SK-N-SH (cell line): ENCODE measurements at regions of chr20 and their contacts with region 1.

Region 1: GRCh38 chr20:36773597-36774390 is at the start of gene DSN1:
- DNase-seq: peak; percentile 97
- H3K4me3 ChIP-seq: peak within 1 kb of the TSS; percentile 76 to 88
- H3K27ac ChIP-seq: peak within 1 kb of the TSS; percentile 94 to 98
- H3K4me1 ChIP-seq: peaks cover 0 to 8% of the 10 kb centered on the region in 2 experiments; a peak in 1 of 4 replicates
- H3K27me3 ChIP-seq: no peaks in the 10 kb centered on the region
- CTCF ChIP-seq: no peak
- EP300 ChIP-seq: no peak
- RAD21 ChIP-seq: no peak; the same call in none of the 2 replicates
- polyA plus RNA-seq, gene DSN1: 7.3 and 8.3 TPM in 2 replicates

Region 2: GRCh38 chr20:36745927-36746659 is 27.7 kb before region 1 on chr20 and contains the start of gene NDRG3:
- CTCF ChIA-PET with region 1: interaction called, 11 read pairs
- POLR2A ChIA-PET with region 1: interaction called, 5 read pairs
- DNase-seq: peak; percentile 97
- H3K4me3 ChIP-seq: peak within 1 kb of the TSS; percentile 82 to 85
- H3K27ac ChIP-seq: peak within 1 kb of the TSS; percentile 28 to 85; a peak in 3 of 4 replicates
- H3K4me1 ChIP-seq: peaks cover 0 to 18% of the 10 kb centered on the region in 2 experiments; a peak in 2 of 4 replicates
- H3K27me3 ChIP-seq: no peaks in the 10 kb centered on the region
- CTCF ChIP-seq: no peak
- EP300 ChIP-seq: no peak
- RAD21 ChIP-seq: no peak
- polyA plus RNA-seq, gene NDRG3: 20.5 and 25.4 TPM in 2 replicates

Region 3: DNA sequence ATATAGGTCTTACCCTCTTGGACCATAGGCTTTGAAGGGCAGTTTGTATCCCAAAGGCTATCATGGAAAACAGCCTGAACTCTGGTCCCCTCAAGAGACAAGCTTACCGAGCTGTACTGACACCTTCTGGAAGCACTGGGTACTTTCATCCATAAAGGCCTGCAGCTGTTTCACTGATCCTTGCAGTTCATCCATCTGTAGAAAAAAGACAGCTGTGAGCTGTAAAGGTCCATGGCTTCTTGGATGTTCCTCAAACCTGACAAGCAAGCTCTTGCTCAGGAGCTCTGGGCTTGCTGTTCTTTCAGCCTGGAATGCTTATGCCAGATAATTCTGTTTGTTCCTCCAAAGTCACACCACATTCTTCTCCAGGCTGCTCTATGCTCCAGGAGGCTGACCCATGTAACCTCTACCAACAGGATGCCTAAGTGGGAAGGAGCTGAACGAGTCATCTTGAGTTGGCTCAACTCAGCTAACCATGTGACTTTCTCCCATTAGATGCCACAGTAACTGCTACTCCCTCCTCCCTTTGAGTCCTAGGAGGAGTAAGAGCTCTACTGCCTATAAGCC is 19.1 kb before region 1 on chr20:
- CTCF ChIA-PET with region 1: interaction called, 18 read pairs
- POLR2A ChIA-PET with region 1: no interaction called
- DNase-seq: peak; percentile 71
- H3K4me3 ChIP-seq: no peak overlapping the region
- H3K27ac ChIP-seq: peak overlapping the region in 1 of 2 experiments; percentile 14; a peak in 1 of 4 replicates
- H3K4me1 ChIP-seq: no peaks in the 10 kb centered on the region
- H3K27me3 ChIP-seq: no peaks in the 10 kb centered on the region
- CTCF ChIP-seq: peak; percentile 76
- EP300 ChIP-seq: no peak
- RAD21 ChIP-seq: peak; percentile 87

Region 4: DNA sequence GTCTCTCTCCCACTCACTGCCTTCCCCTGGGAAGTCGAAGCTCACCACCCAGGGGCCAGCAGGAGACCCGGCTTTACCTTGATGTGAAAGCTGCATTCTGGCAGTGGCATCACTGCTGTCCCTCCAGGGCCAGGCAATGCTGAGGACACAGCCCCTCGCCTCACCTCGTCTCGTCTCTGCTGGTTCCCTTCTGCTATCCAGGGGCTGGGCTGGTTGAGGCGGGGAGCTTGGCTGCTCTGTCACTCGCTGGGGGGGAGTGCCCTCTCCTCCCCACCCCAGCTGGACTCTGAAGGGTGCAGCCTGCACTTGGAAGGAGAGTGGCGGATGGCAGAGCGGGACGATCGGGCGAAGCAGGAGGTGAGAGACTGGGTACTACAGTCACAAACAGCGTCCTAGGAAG is 12.5 kb after region 1 on chr20:
- CTCF ChIA-PET with region 1: interaction called, 13 read pairs
- POLR2A ChIA-PET with region 1: interaction called, 3 read pairs
- DNase-seq: no peak
- H3K4me3 ChIP-seq: no peak overlapping the region
- H3K27ac ChIP-seq: no peak overlapping the region
- H3K4me1 ChIP-seq: no peaks in the 10 kb centered on the region
- H3K27me3 ChIP-seq: no peaks in the 10 kb centered on the region
- CTCF ChIP-seq: no peak
- EP300 ChIP-seq: no peak
- RAD21 ChIP-seq: no peak

Region 5: DNA sequence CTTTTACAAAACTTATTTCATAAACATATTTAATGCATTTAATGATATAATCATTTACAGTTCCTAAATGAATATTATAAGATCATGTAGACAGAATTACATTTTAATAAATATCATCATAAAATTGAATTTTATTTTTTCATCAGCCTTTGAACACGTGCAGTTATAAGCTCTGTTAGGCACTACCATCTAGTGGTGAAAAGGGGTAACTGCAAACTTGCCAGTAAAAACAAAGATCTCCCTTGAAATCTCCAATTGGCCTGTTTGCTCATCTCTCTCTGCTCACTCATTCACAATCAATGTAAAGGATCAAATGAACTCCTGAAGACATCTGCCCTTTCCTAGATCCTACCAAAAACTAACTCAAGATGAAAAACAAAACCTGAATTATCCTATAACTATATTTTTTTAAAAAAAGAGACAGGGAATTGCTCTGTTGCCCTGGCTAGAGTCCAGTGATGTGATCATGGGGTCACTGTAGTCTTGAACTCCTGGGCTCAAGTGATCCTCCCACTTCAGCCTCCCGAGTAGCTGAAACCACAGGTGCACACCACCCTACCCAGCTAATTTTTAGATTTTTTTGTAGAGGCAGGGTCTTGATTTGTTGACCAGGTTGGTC is 146.0 kb after region 1 on chr20:
- CTCF ChIA-PET with region 1: interaction called, 11 read pairs
- POLR2A ChIA-PET with region 1: no interaction called
- DNase-seq: peak; percentile 63
- H3K4me3 ChIP-seq: no peak overlapping the region
- H3K27ac ChIP-seq: no peak overlapping the region
- H3K4me1 ChIP-seq: no peaks in the 10 kb centered on the region
- H3K27me3 ChIP-seq: no peaks in the 10 kb centered on the region
- CTCF ChIP-seq: peak; percentile 83
- EP300 ChIP-seq: no peak
- RAD21 ChIP-seq: peak; percentile 87